Naive thymus-derived CD4-positive, alpha-beta T cell (primary cell): ENCODE measurements at regions of chr17 and their contacts with region 1.

Region 1: DNA sequence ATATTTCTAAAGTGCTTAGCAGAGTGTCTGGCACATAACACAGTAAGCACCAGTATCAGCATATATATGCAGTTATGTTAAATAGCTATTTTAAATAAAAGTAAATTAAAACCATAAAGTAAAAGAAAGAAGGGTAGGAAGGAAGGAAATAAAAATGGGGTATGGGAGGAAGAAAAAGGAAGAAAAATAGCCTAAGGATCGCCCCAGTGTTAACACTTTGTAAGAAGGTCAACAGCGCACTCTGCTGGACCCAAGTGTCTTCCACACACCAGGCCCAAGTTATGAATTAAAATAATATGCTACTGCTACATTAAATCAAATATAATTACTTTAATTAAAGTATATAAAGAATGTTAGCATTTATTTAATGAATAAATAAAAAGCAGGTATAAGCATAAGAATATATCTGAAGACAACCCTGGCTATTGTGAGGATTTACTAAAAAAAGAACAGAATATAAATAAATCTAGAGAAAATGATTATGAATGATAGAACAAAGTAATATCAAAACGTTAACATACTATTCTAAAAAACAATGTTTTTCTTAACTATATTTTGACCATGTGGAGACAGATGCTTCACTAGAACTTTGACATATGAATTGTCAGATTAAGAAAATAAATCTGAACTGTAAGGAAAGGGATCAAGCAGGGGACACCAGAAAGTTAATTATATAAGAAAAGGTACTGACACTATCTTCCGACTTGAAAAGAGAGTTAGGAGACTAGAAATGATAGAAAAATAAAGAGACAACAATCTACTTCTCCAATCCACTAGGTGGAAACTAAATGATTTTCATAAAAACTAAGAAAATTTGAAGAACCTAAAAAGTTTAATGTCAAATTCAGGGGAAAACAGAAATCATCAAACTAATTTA is 25.9 kb downstream of the BRIP1 start:
- DNase-seq: peak in 6 of 9 donors; percentile 16 to 31 (median 27)
- ATAC-seq: peak; percentile 70
- H3K4me3 ChIP-seq: no peak overlapping the region
- H3K4me3 Mint-ChIP-seq: no peak overlapping the region
- H3K27ac ChIP-seq: no peak overlapping the region
- H3K27ac Mint-ChIP-seq: no peak overlapping the region
- H3K4me1 ChIP-seq: no peaks in the 10 kb centered on the region
- H3K4me1 Mint-ChIP-seq: no peaks in the 10 kb centered on the region
- H3K27me3 ChIP-seq: no peaks in the 10 kb centered on the region
- H3K27me3 Mint-ChIP-seq: no peaks in the 10 kb centered on the region

Region 2: GRCh38 chr17:61412143-61412859 is 425.1 kb before region 1 on chr17:
- CTCF ChIA-PET with region 1: interaction called, 3 read pairs
- POLR2A ChIA-PET with region 1: no interaction called
- intact Hi-C with region 1: loop called (anchors 1 kb)
- DNase-seq: peak; percentile 59 to 91 (median 81)
- ATAC-seq: peak; percentile 88
- H3K4me3 ChIP-seq: peak overlapping the region; percentile 64
- H3K4me3 Mint-ChIP-seq: peak overlapping the region in 9 of 10 donors; percentile 56 to 85 (median 76)
- H3K27ac ChIP-seq: peak overlapping the region; percentile 37
- H3K27ac Mint-ChIP-seq: no peak overlapping the region
- H3K4me1 ChIP-seq: peaks cover 7 to 15% of the 10 kb centered on the region in 2 donors
- H3K4me1 Mint-ChIP-seq: peaks cover 12 to 31% (median 23%) of the 10 kb centered on the region in 7 donors
- H3K27me3 ChIP-seq: peaks cover 0 to 23% of the 10 kb centered on the region in 2 donors
- H3K27me3 Mint-ChIP-seq: peaks cover 22 to 59% (median 28%) of the 10 kb centered on the region in 5 donors

Region 3: GRCh38 chr17:61635913-61636432 is 201.4 kb before region 1 on chr17:
- CTCF ChIA-PET with region 1: no interaction called
- POLR2A ChIA-PET with region 1: no interaction called
- intact Hi-C with region 1: loop called in 1 of 2 experiments (anchors 1 kb)
- DNase-seq: peak in 7 of 9 donors; percentile 2 to 40 (median 9)
- ATAC-seq: peak; percentile 60
- H3K4me3 ChIP-seq: no peak overlapping the region
- H3K4me3 Mint-ChIP-seq: no peak overlapping the region
- H3K27ac ChIP-seq: no peak overlapping the region
- H3K27ac Mint-ChIP-seq: no peak overlapping the region
- H3K4me1 ChIP-seq: no peaks in the 10 kb centered on the region
- H3K4me1 Mint-ChIP-seq: no peaks in the 10 kb centered on the region
- H3K27me3 ChIP-seq: peaks cover 0 to 3% of the 10 kb centered on the region in 2 donors
- H3K27me3 Mint-ChIP-seq: peaks cover 56 to 82% (median 72%) of the 10 kb centered on the region in 5 donors

Region 4: DNA sequence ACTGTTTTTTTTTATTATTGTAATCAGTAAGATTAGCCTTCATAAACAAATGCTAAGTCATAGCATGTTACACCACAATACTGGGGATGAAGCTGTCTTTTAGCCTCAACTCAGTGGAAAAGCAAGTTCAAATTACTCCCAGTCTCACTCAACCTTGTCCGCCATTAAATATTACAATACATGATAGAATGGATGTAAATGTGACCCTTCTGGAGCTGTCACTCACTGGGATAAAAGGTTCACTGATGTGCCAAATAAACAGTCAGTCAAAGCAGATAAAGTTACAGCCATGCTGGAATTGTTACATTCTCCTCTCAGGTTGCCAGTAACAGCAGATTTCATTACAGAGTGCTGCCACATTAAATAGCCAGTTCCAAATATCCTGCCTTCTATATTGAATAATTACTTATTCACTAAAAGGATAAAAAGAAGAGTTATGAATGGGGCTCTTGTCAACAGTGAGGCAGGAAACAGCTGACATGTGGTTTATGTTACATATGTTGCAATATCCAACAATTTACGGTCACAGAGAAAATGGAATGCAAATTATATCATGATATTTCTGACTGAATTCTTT is 27.5 kb before region 1 on chr17:
- CTCF ChIA-PET with region 1: no interaction called
- POLR2A ChIA-PET with region 1: no interaction called
- intact Hi-C with region 1: no loop called
- DNase-seq: no peak
- ATAC-seq: no peak
- H3K4me3 ChIP-seq: no peak overlapping the region
- H3K4me3 Mint-ChIP-seq: no peak overlapping the region
- H3K27ac ChIP-seq: no peak overlapping the region
- H3K27ac Mint-ChIP-seq: no peak overlapping the region
- H3K4me1 ChIP-seq: no peaks in the 10 kb centered on the region
- H3K4me1 Mint-ChIP-seq: peaks cover 0 to 7% (median 0%) of the 10 kb centered on the region in 7 donors
- H3K27me3 ChIP-seq: no peaks in the 10 kb centered on the region
- H3K27me3 Mint-ChIP-seq: no peaks in the 10 kb centered on the region

Region 5: GRCh38 chr17:61822326-61823285 is 14.8 kb before region 1 on chr17:
- CTCF ChIA-PET with region 1: no interaction called
- POLR2A ChIA-PET with region 1: no interaction called
- intact Hi-C with region 1: no loop called
- DNase-seq: no peak
- ATAC-seq: no peak
- H3K4me3 ChIP-seq: no peak overlapping the region
- H3K4me3 Mint-ChIP-seq: no peak overlapping the region
- H3K27ac ChIP-seq: no peak overlapping the region
- H3K27ac Mint-ChIP-seq: no peak overlapping the region
- H3K4me1 ChIP-seq: no peaks in the 10 kb centered on the region
- H3K4me1 Mint-ChIP-seq: peaks cover 0 to 3% (median 0%) of the 10 kb centered on the region in 7 donors
- H3K27me3 ChIP-seq: no peaks in the 10 kb centered on the region
- H3K27me3 Mint-ChIP-seq: no peaks in the 10 kb centered on the region